Psoas muscle (tissue), 8 donors: ENCODE measurements at regions of chr18 and their contacts with region 1.

Region 1: DNA sequence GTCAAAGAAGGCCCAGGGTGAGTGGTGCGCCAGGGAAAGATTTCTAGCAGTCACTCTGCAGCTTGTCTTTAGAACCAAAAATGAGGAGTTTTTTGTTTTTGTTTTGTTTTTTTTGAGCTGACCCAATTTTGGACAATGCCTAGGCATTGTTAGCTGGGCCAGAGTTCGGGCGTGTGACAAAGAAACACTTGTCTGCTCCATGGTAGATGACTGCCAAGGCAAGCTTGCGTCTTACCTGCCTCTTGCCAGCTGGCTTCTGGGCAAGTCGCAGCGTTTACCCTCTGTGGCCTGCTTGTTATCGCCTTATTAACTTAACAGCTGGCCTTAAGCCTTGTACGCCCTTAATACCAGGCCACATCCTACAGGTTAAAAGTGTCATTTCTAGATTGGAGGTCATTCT is 114.3 kb downstream of the GALNT1 start:
- DNase-seq: peak; percentile 19 to 67
- ATAC-seq: peak; percentile 80 to 96 (median 92)
- H3K4me3 ChIP-seq: no peak overlapping the region
- H3K27ac ChIP-seq: no peak overlapping the region
- H3K4me1 ChIP-seq: peaks cover 5% of the 10 kb centered on the region
- H3K27me3 ChIP-seq: no peaks in the 10 kb centered on the region
- CTCF ChIP-seq: no peak

Region 2: GRCh38 chr18:35158728-35159450 is 536.9 kb before region 1 on chr18:
- intact Hi-C with region 1: no loop called
- DNase-seq: no peak
- ATAC-seq: no peak
- H3K4me3 ChIP-seq: no peak overlapping the region
- H3K27ac ChIP-seq: no peak overlapping the region
- H3K4me1 ChIP-seq: peaks cover 6% of the 10 kb centered on the region
- H3K27me3 ChIP-seq: no peaks in the 10 kb centered on the region
- CTCF ChIP-seq: no peak

Region 3: DNA sequence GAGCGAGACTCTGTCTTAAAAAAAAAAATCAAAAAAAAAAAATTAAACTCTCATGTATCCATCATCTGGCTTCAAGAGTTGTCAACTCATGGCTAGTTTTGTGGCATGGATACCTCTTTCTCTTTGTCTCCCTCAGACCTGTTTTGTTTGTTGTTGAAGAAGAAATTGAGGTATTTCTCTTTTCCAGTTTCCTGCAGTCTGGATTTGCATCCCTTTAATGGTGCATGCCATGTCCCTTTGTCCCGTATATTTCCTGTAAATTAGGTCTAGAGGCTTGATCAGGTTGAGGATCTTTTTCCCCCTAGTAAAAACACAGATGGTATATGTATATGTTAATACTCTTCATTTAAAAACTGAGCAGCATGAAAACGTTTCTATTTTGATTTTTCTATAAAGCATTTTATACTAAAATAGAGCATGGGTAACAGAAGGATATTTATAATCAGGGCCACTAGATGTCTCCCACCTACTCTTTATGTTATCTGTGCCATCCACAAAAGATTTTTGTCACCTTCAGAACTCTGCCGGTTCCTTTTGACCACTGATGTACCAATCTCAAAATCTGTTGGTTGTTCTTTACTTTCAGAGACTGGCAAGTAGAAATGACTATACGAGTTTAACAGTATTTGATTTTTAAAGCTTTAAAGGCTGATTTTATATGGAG is 34.2 kb before region 1 on chr18:
- intact Hi-C with region 1: no loop called
- DNase-seq: no peak
- ATAC-seq: no peak
- H3K4me3 ChIP-seq: no peak overlapping the region
- H3K27ac ChIP-seq: no peak overlapping the region
- H3K4me1 ChIP-seq: no peaks in the 10 kb centered on the region
- H3K27me3 ChIP-seq: no peaks in the 10 kb centered on the region
- CTCF ChIP-seq: no peak

Region 4: DNA sequence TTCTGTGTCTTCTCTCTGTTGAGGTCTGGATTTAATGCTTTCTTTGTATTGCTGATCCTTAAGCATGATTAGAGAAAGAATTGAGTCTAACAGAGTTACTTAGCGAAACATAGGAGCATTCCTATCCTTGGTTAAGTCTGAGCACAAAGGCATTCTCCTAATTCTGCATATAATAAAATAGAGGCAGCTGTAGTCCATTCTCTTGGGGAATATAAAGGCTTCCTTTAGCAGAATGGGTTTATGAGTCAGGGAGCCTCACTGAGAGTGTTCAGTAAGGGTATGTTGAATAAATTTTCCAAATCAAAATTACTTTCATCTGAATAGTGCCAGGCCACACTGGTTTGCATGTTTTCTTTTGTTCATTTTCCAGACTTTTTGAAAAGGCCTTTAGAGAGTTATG is 12.8 kb before region 1 on chr18:
- intact Hi-C with region 1: loop called in 1 of 2 experiments (anchors 1 kb)
- DNase-seq: no peak
- ATAC-seq: no peak
- H3K4me3 ChIP-seq: no peak overlapping the region
- H3K27ac ChIP-seq: no peak overlapping the region
- H3K4me1 ChIP-seq: no peaks in the 10 kb centered on the region
- H3K27me3 ChIP-seq: no peaks in the 10 kb centered on the region
- CTCF ChIP-seq: no peak